Pancreas (tissue), 10 donors: ENCODE measurements at regions of chrX and their contacts with region 1.

Region 1: DNA sequence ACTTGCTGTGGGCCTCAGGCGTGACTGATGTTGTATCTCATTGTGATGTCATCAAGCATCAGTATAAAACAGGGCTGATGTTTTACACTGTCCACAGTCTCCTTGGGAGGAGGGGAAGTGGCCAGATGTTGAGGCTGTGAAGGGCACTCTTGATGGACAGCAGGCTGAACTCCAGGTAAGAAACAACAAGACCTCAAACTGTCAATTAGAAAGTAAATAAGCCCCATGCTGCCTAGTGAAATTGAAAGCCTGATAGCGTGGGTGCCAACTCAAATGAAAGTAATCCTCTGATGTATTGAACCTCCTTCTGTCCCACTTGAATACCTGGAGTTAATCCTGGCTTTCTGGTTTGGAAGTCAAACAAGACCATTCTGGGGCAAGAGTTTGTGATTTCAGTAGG is 19.7 kb downstream of the VSIG1 start:
- DNase-seq: no peak
- ATAC-seq: no peak
- H3K4me3 ChIP-seq: no peak overlapping the region
- H3K27ac ChIP-seq: no peak overlapping the region
- H3K4me1 ChIP-seq: no peaks in the 10 kb centered on the region
- H3K27me3 ChIP-seq: no peaks in the 10 kb centered on the region
- CTCF ChIP-seq: no peak

Region 2: DNA sequence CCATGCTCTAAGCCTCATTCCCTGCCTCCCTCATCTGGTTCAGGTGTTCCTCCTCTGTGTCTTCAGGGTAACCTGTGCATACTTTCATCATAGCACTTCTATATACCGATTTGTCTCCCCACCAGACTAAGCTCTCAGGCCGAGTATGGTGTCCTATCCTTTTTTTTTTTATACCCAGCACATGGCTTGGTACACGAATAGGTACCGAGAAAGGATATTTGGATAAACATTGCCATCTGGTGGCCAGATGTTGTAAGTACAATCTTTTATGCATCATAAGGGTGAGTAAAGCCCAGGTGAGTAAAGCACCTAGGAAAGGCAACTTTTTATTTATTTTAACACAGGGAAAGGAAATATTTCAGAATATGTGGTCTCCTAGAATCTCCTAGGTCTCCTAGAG is 170.6 kb before region 1 on chrX:
- intact Hi-C with region 1: no loop called
- DNase-seq: peak in 1 of 6 donors; percentile 34
- ATAC-seq: peak; percentile 72 to 84 (median 81)
- H3K4me3 ChIP-seq: no peak overlapping the region
- H3K27ac ChIP-seq: no peak overlapping the region
- H3K4me1 ChIP-seq: no peaks in the 10 kb centered on the region
- H3K27me3 ChIP-seq: peaks cover 0 to 6% (median 0%) of the 10 kb centered on the region in 4 donors
- CTCF ChIP-seq: peak; percentile 23 to 62 (median 42)

Region 3: DNA sequence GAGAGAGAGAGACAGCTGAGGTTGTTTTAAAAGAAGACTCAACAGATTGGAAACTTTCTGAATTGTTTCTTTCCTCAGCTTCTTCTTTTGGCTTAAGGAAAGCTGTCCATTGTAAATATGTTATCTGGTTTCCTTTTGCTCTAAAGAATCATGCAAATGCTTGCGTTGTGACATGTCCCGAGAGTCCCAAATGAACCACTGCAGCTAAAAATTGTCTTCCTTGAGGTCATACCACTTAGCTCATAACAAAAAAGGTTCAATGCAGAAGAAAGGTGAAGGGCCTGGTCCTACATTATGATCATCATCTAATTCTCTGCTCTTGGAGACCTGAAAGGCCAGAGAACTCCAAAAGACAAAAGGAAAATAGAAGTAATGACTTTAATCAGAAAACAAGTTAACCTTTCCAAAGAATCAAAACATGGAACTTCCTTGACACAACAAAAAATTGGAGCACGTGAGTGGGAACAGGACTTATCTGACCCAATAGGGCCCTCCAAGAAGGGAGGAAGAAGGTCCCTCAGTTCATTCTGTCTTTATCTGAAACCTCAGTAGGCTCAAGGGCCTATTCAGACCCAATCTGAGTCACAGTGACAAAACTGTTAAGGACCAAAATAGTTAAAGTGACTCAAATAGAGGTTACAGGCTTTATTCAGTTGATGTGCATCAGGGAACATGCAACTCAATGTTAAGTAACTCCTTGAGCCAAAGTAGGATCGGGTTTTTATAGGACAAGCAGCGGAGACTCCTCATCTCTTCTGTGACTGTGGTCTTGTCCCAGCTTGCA is 34.5 kb before region 1 on chrX:
- intact Hi-C with region 1: loop called in 1 of 3 experiments (anchors 5 kb)
- DNase-seq: no peak
- ATAC-seq: no peak
- H3K4me3 ChIP-seq: no peak overlapping the region
- H3K27ac ChIP-seq: no peak overlapping the region
- H3K4me1 ChIP-seq: no peaks in the 10 kb centered on the region
- H3K27me3 ChIP-seq: peaks cover 0 to 6% (median 3%) of the 10 kb centered on the region in 4 donors
- CTCF ChIP-seq: no peak